ENCODE measurements at regions of chr1 and their contacts with region 1.

Region 1: DNA sequence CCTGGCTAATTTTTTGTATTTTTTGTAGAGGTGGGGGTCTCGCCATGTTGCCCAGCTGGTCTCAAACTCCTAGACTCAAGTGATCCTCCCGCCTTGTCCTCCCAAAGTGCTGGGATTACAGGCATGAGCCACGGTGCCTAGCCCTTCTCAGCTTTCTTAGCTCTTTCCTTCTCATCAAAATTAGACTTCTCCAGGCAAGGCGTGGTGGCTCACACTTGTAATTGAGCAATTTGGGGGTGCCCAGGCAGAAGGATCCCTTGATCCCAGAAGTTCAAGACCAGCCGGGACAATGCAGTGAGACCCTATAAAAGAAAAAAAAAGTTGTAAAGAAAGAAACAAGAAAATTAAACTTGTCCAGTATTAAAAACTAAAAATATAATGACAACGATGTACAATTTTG is 112.6 kb upstream of the ERRFI1 start:
- H3K4me3 ChIP-seq: no peak overlapping the region
- H3K27ac ChIP-seq: no peak overlapping the region
- H3K4me1 ChIP-seq: peaks cover 6% of the 10 kb centered on the region
- CTCF ChIP-seq: no peak

Region 2: DNA sequence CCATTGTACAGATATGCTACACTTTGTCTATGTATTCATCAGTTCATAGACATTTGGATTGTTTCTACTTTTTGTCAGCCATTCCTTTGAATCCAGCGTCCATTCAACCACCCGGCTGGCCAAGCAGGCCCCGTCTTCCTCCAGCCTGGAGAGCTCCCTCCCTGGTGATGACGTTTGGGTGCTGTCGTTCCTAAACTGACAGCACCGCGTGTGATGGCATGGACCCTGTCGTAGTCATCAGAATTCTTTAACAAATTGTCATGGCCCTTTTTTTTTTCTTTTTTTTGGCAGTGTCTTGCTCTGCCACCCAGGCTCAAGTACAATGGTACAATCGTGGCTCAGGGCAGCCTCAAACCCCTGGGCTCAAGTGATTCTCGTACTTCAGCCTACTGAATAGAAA is 26.0 kb after region 1 on chr1:
- CTCF ChIA-PET with region 1: interaction called, 10 read pairs
- POLR2A ChIA-PET with region 1: no interaction called
- H3K4me3 ChIP-seq: no peak overlapping the region
- H3K27ac ChIP-seq: no peak overlapping the region
- H3K4me1 ChIP-seq: no peaks in the 10 kb centered on the region
- CTCF ChIP-seq: no peak

Measured in HEK293 (cell line).